Caco-2 (cell line): ENCODE measurements at regions of chr10 and their contacts with region 1.

Region 1: DNA sequence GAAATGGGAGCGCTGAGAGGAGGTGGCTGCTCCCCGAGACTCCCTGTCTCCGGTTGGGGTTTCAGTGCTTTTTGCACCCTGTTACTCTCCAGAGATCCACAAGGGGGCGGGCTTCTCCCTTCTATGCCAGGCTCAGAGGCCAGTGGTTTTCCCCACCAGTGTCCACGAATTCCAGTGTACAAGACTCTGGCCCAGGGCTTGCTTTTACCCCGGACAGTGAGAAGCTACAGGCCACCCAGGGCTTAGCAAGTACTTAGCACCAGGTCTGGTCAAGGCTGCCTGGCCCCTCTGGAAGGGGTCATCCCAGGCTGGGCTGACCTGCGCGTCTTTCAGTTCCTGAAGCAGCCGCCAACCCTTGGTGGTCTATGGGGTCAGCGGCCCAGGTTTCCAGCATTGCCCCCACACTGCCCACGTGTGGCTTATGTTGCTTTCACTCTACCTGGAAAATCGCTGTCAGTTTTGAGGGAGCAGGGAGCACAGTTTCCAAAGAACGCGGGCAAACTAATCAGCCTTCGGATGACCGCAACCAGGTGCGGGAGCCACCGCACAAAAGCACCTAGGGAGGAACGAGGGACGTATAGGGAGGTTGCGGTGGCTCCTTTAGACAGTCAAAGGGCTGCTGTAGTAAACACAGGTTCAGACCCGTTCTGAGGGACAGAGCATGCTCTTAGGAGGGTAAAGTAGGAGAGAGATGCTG is 6.8 kb downstream of the CYP26A1 start:
- DNase-seq: peak; percentile 59 to 72
- H3K4me3 ChIP-seq: no peak overlapping the region
- H3K4me3 Mint-ChIP-seq: no peak overlapping the region
- H3K27ac Mint-ChIP-seq: peak overlapping the region; percentile 86
- H3K4me1 ChIP-seq: peaks cover 26% of the 10 kb centered on the region
- H3K4me1 Mint-ChIP-seq: peaks cover 25% of the 10 kb centered on the region
- H3K27me3 ChIP-seq: no peaks in the 10 kb centered on the region
- H3K27me3 Mint-ChIP-seq: no peaks in the 10 kb centered on the region
- CTCF ChIP-seq: peak; percentile 84 to 94

Region 2: GRCh38 chr10:93030409-93030808 is 50.1 kb before region 1 on chr10:
- CTCF ChIA-PET with region 1: no interaction called
- POLR2A ChIA-PET with region 1: no interaction called
- intact Hi-C with region 1: no loop called
- DNase-seq: no peak
- H3K4me3 ChIP-seq: no peak overlapping the region
- H3K4me3 Mint-ChIP-seq: no peak overlapping the region
- H3K27ac Mint-ChIP-seq: no peak overlapping the region
- H3K4me1 ChIP-seq: peaks cover 11% of the 10 kb centered on the region; the same call in 1 of the 2 replicates
- H3K4me1 Mint-ChIP-seq: peaks cover 8% of the 10 kb centered on the region
- H3K27me3 ChIP-seq: no peaks in the 10 kb centered on the region
- H3K27me3 Mint-ChIP-seq: no peaks in the 10 kb centered on the region
- CTCF ChIP-seq: no peak

Region 3: GRCh38 chr10:93095225-93095624 is 14.7 kb after region 1 on chr10:
- CTCF ChIA-PET with region 1: no interaction called
- POLR2A ChIA-PET with region 1: no interaction called
- intact Hi-C with region 1: no loop called
- DNase-seq: no peak
- H3K4me3 ChIP-seq: no peak overlapping the region
- H3K4me3 Mint-ChIP-seq: no peak overlapping the region
- H3K27ac Mint-ChIP-seq: no peak overlapping the region
- H3K4me1 ChIP-seq: peaks cover 9% of the 10 kb centered on the region; the same call in 1 of the 2 replicates
- H3K4me1 Mint-ChIP-seq: peaks cover 7% of the 10 kb centered on the region
- H3K27me3 ChIP-seq: no peaks in the 10 kb centered on the region
- H3K27me3 Mint-ChIP-seq: no peaks in the 10 kb centered on the region
- CTCF ChIP-seq: no peak

Region 4: GRCh38 chr10:93352638-93353383 is 272.3 kb after region 1 on chr10:
- CTCF ChIA-PET with region 1: no interaction called
- POLR2A ChIA-PET with region 1: no interaction called
- intact Hi-C with region 1: loop called (anchors 1 kb)
- DNase-seq: peak in 1 of 2 experiments; percentile 58
- H3K4me3 ChIP-seq: no peak overlapping the region
- H3K4me3 Mint-ChIP-seq: no peak overlapping the region
- H3K27ac Mint-ChIP-seq: no peak overlapping the region
- H3K4me1 ChIP-seq: peaks cover 3% of the 10 kb centered on the region; the same call in 1 of the 2 replicates
- H3K4me1 Mint-ChIP-seq: peaks cover 4% of the 10 kb centered on the region
- H3K27me3 ChIP-seq: no peaks in the 10 kb centered on the region
- H3K27me3 Mint-ChIP-seq: no peaks in the 10 kb centered on the region
- CTCF ChIP-seq: peak; percentile 42 to 61